Lower leg skin (tissue), 4 donors: ENCODE measurements at regions of chr11 and their contacts with region 1.

Region 1: GRCh38 chr11:61187505-61188130 is 15.7 kb upstream of the PGA3 start:
- DNase-seq: peak; percentile 60 to 91
- H3K4me3 ChIP-seq: no peak overlapping the region
- CTCF ChIP-seq: peak in 2 of 3 donors; percentile 67 to 80
- POLR2A ChIP-seq: no peak

Region 2: DNA sequence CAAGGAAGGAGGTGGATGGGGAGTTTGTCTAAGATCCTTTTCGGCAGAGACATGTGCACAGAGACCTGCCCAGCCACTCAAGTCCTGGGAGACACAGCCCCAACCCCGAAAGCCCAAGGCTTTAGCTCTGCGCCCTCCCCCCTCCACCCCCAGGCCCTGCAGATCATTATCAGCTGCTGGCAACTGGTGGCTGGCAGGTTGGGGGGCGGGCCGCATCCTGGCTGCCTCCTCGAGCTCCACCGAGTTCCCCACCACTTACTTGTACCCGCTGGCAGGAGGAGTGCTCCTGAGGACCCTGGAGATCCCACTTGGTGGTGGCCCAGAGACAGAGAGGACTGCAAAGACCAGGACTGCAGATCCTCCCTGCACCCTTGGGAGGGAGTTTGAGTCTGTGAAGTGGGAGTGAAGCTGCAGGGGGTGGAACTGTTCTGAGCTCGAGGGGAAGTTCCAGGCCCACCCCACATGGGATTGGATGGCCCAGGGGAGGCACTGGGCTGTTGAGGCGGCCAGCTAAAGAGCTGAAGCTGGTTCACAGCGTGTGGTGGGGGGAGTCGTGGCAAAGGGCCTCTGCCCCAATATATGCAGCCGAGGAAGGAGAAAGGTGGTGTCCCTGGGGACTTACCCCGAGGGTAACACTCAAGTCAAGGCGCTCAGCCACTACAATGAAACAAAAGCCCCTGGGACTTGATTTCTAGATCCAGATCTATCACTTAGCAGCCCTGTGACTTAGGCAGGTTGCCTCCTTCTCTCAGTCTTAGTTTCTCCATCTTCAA is 365.6 kb before region 1 on chr11:
- intact Hi-C with region 1: loop called (anchors 10 kb)
- DNase-seq: no peak
- H3K4me3 ChIP-seq: no peak overlapping the region
- CTCF ChIP-seq: no peak
- POLR2A ChIP-seq: no peak

Region 3: DNA sequence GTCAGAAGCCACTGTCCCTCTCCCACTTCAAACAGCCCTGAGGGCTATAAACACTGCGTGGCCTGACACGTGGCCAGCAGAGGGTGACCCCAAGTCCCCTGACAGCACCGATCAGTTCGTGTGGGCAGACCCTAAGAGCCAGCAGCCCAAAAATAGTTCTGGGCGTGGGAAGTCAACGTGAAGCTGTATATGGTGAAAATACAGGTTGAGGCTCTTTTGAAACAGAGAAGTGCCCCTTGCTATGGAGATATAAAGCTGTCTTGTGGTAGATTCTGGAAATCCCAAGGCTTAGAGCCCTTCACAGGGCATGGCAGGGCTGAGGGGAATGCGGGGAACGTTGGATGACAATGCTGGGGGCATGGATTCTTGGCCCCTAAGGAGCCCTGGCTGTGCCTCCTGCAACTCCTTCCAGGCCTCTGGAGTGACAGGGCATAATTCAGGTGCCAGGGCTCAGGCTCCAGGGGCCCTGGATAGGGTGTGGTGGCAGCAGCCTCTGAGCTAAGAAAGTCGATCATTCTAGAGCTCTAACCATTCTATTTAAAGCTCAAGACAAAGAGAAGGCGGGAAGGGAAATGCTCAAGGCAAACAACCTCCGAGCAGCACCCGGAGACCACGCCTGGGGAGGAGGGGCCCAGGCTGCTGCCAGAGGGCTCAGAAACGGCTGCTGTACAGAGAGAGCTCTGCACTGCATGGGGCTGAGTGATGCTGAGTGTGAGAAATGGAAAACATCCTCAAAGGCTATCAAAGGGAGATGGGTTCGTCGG is 145.7 kb before region 1 on chr11:
- intact Hi-C with region 1: no loop called
- DNase-seq: no peak
- H3K4me3 ChIP-seq: no peak overlapping the region
- CTCF ChIP-seq: no peak
- POLR2A ChIP-seq: no peak

Region 4: GRCh38 chr11:61129639-61130523 is 57.7 kb before region 1 on chr11:
- intact Hi-C with region 1: loop called (anchors 5 kb)
- DNase-seq: peak; percentile 80 to 97
- H3K4me3 ChIP-seq: no peak overlapping the region
- CTCF ChIP-seq: peak in 1 of 3 donors; percentile 98
- POLR2A ChIP-seq: no peak